ENCODE measurements at regions of chr7 and their contacts with region 1.

Region 1: GRCh38 chr7:6323967-6324701 is 51.7 kb upstream of the CYTH3 start:
- DNase-seq: no peak
- H3K4me3 ChIP-seq: no peak overlapping the region
- H3K27ac ChIP-seq: no peak overlapping the region
- H3K4me1 ChIP-seq: no peaks in the 10 kb centered on the region
- H3K27me3 ChIP-seq: no peaks in the 10 kb centered on the region
- CTCF ChIP-seq: no peak
- EP300 ChIP-seq: no peak
- POLR2A ChIP-seq: no peak
- RAD21 ChIP-seq: no peak

Region 2: GRCh38 chr7:6153646-6154541 is 170.2 kb before region 1 on chr7:
- CTCF ChIA-PET with region 1: interaction called, 103 read pairs
- POLR2A ChIA-PET with region 1: no interaction called
- DNase-seq: no peak
- H3K4me3 ChIP-seq: no peak overlapping the region
- H3K27ac ChIP-seq: no peak overlapping the region
- H3K4me1 ChIP-seq: no peaks in the 10 kb centered on the region
- H3K27me3 ChIP-seq: no peaks in the 10 kb centered on the region
- CTCF ChIP-seq: no peak
- EP300 ChIP-seq: no peak
- POLR2A ChIP-seq: no peak
- RAD21 ChIP-seq: no peak

Region 3: GRCh38 chr7:6160191-6160623 is 163.9 kb before region 1 on chr7:
- CTCF ChIA-PET with region 1: interaction called, 103 read pairs
- POLR2A ChIA-PET with region 1: interaction called, 4 read pairs
- DNase-seq: peak in 1 of 2 experiments; percentile 60
- H3K4me3 ChIP-seq: no peak overlapping the region
- H3K27ac ChIP-seq: no peak overlapping the region
- H3K4me1 ChIP-seq: peaks cover 0 to 2% (median under 1%) of the 10 kb centered on the region in 4 experiments; a peak in 1 of 7 replicates
- H3K27me3 ChIP-seq: no peaks in the 10 kb centered on the region
- CTCF ChIP-seq: peak; percentile 70 to 74 (median 73)
- EP300 ChIP-seq: no peak
- POLR2A ChIP-seq: no peak
- RAD21 ChIP-seq: peak; percentile 64 to 72

Region 4: DNA sequence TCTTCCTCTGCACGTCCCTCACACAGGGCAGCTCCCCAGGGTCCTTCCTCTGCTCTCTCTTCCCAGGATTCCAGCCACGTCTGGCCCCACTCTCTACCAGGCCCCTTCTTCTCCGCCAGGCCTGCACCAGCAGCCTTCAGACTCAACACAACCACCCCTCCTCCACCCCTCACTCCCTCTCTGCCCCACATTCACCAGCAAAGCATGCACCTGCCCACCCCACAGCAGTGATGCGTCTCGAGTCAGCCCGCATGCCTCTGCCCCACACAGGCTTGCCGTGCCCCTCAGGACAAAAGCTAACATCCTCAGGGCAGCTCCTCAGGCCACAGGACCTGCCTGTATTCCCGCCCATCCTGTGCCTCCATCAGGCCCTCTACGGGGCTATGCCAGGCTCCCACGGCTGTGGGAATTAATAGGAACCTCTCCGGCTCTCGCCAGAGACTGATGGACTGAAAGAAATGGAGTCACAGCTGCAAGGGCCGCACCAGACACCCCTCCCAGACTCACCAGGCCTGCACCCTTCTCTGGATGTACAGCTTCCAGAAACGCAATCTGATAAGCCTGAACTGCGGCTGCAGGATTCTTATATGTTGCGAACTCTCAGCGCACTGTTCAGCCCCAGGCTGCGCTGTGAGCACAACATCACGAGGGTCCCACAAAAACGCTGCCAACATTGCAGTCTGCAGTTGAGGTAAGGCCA is 151.8 kb before region 1 on chr7:
- CTCF ChIA-PET with region 1: interaction called, 45 read pairs
- POLR2A ChIA-PET with region 1: interaction called, 3 read pairs
- DNase-seq: no peak
- H3K4me3 ChIP-seq: peak overlapping the region in 1 of 4 experiments; percentile 9; a peak in 1 of 8 replicates
- H3K27ac ChIP-seq: peak overlapping the region; percentile 28; the same call in 1 of the 2 replicates
- H3K4me1 ChIP-seq: peaks cover 0 to 19% (median 12%) of the 10 kb centered on the region in 4 experiments; a peak in 5 of 7 replicates
- H3K27me3 ChIP-seq: no peaks in the 10 kb centered on the region
- CTCF ChIP-seq: no peak; a peak in 1 of 4 replicates
- EP300 ChIP-seq: no peak
- POLR2A ChIP-seq: no peak
- RAD21 ChIP-seq: no peak

Region 5: DNA sequence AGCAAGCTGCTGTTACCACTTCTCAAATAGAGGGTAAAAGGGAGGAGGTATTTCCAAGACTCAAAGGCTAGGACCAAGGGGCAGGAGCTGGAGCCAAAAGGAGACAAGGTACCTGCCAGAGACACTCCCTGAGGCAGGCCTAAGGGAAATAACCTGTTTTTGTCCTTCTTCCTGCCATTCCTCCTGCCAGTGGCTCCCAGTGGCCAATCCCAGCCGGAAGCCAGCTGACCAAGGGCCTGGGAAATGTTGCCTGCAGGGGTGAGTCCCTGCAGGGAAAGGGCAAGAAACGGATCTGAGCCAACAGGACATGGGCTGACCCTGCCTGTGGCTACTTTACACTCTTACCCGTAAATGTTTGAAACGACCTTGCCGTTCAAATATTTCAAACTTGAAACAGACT is 55.2 kb before region 1 on chr7:
- CTCF ChIA-PET with region 1: interaction called, 25 read pairs
- POLR2A ChIA-PET with region 1: no interaction called
- DNase-seq: no peak
- H3K4me3 ChIP-seq: no peak overlapping the region
- H3K27ac ChIP-seq: no peak overlapping the region
- H3K4me1 ChIP-seq: peaks cover 3 to 13% (median 8%) of the 10 kb centered on the region in 4 experiments; a peak in 5 of 7 replicates
- H3K27me3 ChIP-seq: peaks cover 0 to 9% (median 6%) of the 10 kb centered on the region in 4 experiments; a peak in 4 of 7 replicates
- CTCF ChIP-seq: no peak
- EP300 ChIP-seq: no peak
- POLR2A ChIP-seq: no peak
- RAD21 ChIP-seq: no peak

Region 6: DNA sequence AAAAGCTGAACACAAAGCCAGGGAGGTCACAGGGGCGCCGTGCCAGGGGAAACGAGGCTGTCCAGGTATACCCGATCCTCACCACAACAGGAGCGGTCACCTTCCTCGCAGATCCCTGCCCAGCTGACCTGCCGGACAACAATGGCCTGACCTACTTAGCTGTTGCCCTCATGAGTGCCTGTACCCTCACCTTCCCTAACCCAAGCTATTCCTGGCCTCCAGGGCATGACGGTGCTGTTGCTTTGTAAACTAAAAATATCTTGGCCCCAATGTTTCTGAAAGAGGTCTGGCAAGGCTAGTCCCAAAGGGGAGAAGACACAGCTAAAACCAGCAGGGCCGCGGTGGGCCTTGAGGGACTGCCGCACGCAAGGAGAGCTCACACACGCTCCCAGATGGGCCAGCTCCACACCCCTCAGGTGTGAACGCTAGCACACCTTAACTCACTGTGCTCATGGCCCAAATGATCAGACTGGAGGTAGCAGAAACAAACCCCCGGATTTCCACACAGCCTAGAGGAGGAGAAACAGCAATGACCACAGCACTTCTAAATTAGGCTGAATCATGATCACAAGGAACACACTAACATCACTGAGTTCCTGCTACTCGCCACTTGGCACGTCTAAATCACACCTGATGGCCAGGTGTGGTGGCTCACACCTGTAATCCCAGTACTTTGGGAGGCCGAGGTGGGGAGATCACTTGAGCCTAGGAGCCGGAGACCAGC is 14.6 kb after region 1 on chr7:
- CTCF ChIA-PET with region 1: interaction called, 12 read pairs
- POLR2A ChIA-PET with region 1: interaction called, 4 read pairs
- DNase-seq: no peak
- H3K4me3 ChIP-seq: no peak overlapping the region
- H3K27ac ChIP-seq: no peak overlapping the region
- H3K4me1 ChIP-seq: no peaks in the 10 kb centered on the region
- H3K27me3 ChIP-seq: no peaks in the 10 kb centered on the region
- CTCF ChIP-seq: no peak
- EP300 ChIP-seq: no peak
- POLR2A ChIP-seq: no peak
- RAD21 ChIP-seq: no peak